ENCODE measurements at regions of chr4 and their contacts with region 1.

Region 1: GRCh38 chr4:54731552-54731951 is 73.8 kb downstream of the KIT start:
- DNase-seq: no peak
- H3K4me3 ChIP-seq: no peak overlapping the region
- CTCF ChIP-seq: no peak
- POLR2A ChIP-seq: no peak

Region 2: DNA sequence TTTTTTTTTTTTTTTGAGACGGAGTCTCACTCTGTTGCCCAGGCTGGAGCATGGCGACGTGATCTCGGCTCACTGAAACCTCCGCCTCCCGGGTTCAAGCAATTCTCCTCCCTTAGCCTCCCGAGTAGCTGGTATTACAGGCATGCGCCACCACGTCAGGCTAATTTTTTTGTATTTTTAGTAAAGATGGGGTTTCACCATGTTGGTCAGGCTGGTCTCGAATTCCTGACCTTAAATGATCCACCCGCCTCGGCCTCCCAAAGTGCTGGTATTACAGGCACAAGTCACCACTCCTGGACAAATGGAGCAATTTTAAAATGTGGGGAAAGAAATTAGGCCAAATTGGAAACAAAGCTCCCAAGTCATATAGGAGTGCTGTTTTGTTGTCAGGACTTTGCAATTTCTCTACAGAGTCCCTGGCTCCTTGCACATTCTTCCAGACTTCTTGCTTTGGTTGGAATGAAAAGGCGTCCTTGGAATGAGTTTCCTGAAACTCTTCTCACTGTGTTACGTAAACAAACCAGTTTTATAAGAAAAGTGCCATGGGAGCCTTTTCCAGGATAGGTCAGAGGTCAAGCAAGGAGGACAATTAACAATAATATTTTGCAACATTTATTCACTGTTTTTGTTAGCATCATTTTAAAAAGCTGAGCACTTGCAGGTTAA is 106.3 kb before region 1 on chr4:
- intact Hi-C with region 1: no loop called
- DNase-seq: no peak
- H3K4me3 ChIP-seq: no peak overlapping the region
- CTCF ChIP-seq: no peak
- POLR2A ChIP-seq: no peak

Region 3: GRCh38 chr4:56062603-56063031 is 1331.1 kb after region 1 on chr4:
- intact Hi-C with region 1: loop called (anchors 10 kb)
- DNase-seq: no peak
- H3K4me3 ChIP-seq: no peak overlapping the region
- CTCF ChIP-seq: no peak
- POLR2A ChIP-seq: no peak

Measured in lower leg skin (tissue), 4 donors.